CD4-positive, alpha-beta T cell (primary cell): ENCODE measurements at regions of chr5 and their contacts with region 1.

Region 1: DNA sequence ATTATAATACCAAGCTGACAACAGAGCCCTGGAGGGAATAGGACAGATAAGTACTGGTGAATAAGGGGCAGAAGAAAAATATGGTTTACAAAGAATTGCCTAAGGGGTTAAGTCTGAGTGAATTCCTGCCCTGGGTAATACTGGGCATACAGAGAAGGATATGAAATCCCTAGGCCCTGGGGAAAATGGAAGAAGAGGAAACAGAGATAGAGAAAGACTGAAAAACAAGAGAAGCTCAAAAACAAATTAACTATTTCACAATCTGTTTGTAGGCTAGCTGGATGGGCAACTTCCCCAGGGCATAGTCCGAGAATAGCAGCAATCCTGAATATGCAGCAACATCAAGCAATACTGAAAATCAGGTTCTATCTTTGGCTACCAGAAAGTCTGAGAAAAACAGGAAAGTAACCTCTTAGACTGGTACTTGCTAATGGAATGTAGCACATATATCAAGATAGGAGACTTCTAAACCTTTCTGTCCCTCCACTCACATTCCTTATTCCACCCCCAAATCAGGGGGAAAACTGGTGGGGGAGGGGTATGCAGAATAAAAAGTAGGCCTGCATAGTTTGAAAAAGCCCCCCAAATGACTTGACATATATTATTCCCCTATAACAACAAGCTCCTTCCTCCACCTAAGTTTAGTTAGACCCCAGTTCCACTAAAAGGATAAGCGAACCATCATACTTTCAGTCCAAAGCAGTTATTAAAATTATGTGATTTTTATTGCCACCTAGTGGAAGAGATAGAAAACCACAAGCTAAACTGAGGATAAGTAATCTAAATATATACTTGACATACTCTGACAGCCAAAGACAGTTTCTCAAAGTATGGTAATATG is 20.6 kb downstream of the SLC38A9 start:
- DNase-seq: peak in 3 of 14 experiments; percentile 47
- ATAC-seq: peak; percentile 59
- H3K4me3 ChIP-seq: no peak overlapping the region
- H3K4me3 Mint-ChIP-seq: no peak overlapping the region
- H3K27ac ChIP-seq: no peak overlapping the region
- H3K27ac Mint-ChIP-seq: no peak overlapping the region
- H3K4me1 ChIP-seq: no peaks in the 10 kb centered on the region
- H3K4me1 Mint-ChIP-seq: peaks cover 5% of the 10 kb centered on the region
- H3K27me3 ChIP-seq: no peaks in the 10 kb centered on the region
- H3K27me3 Mint-ChIP-seq: no peaks in the 10 kb centered on the region
- CTCF ChIP-seq: peak; percentile 82

Region 2: GRCh38 chr5:54889826-54890225 is 801.7 kb before region 1 on chr5:
- CTCF ChIA-PET with region 1: no interaction called
- POLR2A ChIA-PET with region 1: no interaction called
- intact Hi-C with region 1: loop called in 1 of 2 experiments (anchors 5 kb)
- DNase-seq: no peak
- ATAC-seq: no peak
- H3K4me3 ChIP-seq: no peak overlapping the region
- H3K4me3 Mint-ChIP-seq: no peak overlapping the region
- H3K27ac ChIP-seq: no peak overlapping the region
- H3K27ac Mint-ChIP-seq: no peak overlapping the region
- H3K4me1 ChIP-seq: no peaks in the 10 kb centered on the region
- H3K4me1 Mint-ChIP-seq: no peaks in the 10 kb centered on the region
- H3K27me3 ChIP-seq: peaks cover 15 to 39% of the 10 kb centered on the region in 2 experiments
- H3K27me3 Mint-ChIP-seq: peaks cover 77% of the 10 kb centered on the region
- CTCF ChIP-seq: no peak

Region 3: GRCh38 chr5:55172051-55172899 is 519.2 kb before region 1 on chr5:
- CTCF ChIA-PET with region 1: no interaction called
- POLR2A ChIA-PET with region 1: no interaction called
- intact Hi-C with region 1: loop called (anchors 5 kb)
- DNase-seq: peak; percentile 18 to 90 (median 47)
- ATAC-seq: peak; percentile 82
- H3K4me3 ChIP-seq: peak overlapping the region; percentile 63
- H3K4me3 Mint-ChIP-seq: peak overlapping the region; percentile 79
- H3K27ac ChIP-seq: no peak overlapping the region
- H3K27ac Mint-ChIP-seq: no peak overlapping the region
- H3K4me1 ChIP-seq: peaks cover 28% of the 10 kb centered on the region
- H3K4me1 Mint-ChIP-seq: peaks cover 43% of the 10 kb centered on the region
- H3K27me3 ChIP-seq: peaks cover 49 to 83% of the 10 kb centered on the region in 2 experiments
- H3K27me3 Mint-ChIP-seq: peaks cover 86% of the 10 kb centered on the region
- CTCF ChIP-seq: peak; percentile 90

Region 4: GRCh38 chr5:55324815-55325418 is 366.6 kb before region 1 on chr5:
- CTCF ChIA-PET with region 1: no interaction called
- POLR2A ChIA-PET with region 1: no interaction called
- intact Hi-C with region 1: loop called (anchors 5 kb)
- DNase-seq: peak in 3 of 14 experiments; percentile 58 to 60 (median 59)
- ATAC-seq: peak; percentile 82
- H3K4me3 ChIP-seq: no peak overlapping the region
- H3K4me3 Mint-ChIP-seq: no peak overlapping the region
- H3K27ac ChIP-seq: no peak overlapping the region
- H3K27ac Mint-ChIP-seq: no peak overlapping the region
- H3K4me1 ChIP-seq: peaks cover under 1% of the 10 kb centered on the region
- H3K4me1 Mint-ChIP-seq: peaks cover 48% of the 10 kb centered on the region
- H3K27me3 ChIP-seq: no peaks in the 10 kb centered on the region
- H3K27me3 Mint-ChIP-seq: no peaks in the 10 kb centered on the region
- CTCF ChIP-seq: peak; percentile 61

Region 5: DNA sequence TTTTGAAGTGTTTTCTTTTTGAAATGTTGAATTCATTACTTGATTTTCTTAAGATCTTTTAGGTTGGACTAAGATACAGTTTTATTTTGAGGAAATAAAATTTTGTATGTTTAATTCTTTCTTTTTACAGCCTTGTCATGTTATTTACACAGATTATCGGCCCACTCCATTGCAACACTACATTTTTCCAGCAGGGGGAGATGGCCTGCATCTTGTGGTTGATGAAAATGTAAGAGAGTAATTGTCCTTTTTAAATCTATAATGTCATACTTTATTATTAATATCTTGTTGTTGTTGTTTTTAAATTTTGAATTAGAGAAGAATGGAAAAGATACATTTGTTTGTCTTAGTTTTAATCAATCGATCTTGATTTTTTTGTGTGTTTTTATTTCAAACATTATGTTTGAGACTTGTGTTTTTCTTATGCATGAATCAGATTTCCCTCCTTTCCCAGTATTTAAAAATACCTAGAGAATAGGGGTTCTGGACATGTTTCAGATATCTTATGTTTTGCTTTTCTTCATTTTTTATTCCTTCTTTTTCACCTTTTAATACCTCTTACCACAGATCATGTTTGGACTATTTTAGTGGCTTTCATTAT is 347.0 kb before region 1 on chr5:
- CTCF ChIA-PET with region 1: no interaction called
- POLR2A ChIA-PET with region 1: no interaction called
- intact Hi-C with region 1: loop called (anchors 1 to 2 kb)
- DNase-seq: peak; percentile 30 to 78 (median 52)
- ATAC-seq: peak; percentile 73
- H3K4me3 ChIP-seq: no peak overlapping the region
- H3K4me3 Mint-ChIP-seq: no peak overlapping the region
- H3K27ac ChIP-seq: no peak overlapping the region
- H3K27ac Mint-ChIP-seq: no peak overlapping the region
- H3K4me1 ChIP-seq: no peaks in the 10 kb centered on the region
- H3K4me1 Mint-ChIP-seq: peaks cover 12% of the 10 kb centered on the region
- H3K27me3 ChIP-seq: no peaks in the 10 kb centered on the region
- H3K27me3 Mint-ChIP-seq: no peaks in the 10 kb centered on the region
- CTCF ChIP-seq: peak; percentile 94

Region 6: DNA sequence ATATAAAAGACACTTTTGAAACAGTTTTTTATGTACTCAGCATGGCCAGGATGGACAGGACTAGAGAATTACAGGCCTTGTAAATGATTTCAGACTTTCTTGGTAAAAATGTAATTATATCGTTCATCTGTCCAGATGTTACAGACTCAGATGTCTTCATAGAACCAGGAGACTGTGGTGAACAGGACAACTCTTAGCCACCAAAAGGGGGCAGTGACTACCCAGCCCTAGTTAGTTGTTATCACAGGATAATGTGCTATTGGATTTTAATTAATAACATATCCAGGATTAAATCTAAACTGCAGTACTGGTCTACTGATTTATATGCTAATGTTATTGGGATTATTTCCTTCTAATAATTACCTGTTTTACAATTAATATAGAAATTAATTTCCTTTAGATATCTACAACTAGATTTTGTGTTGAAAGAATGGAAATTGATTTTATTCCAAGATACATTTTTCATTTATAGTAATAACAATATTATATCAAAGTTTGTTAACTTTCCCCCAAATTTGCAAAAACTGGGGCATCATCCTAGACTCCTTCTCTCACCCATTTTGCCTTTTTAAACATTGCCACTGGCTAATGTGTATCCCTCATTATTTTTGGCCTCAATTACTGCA is 284.3 kb before region 1 on chr5:
- CTCF ChIA-PET with region 1: interaction called, 3 read pairs
- POLR2A ChIA-PET with region 1: no interaction called
- intact Hi-C with region 1: loop called (anchors 1 to 2 kb)
- DNase-seq: peak in 4 of 14 experiments; percentile 20 to 55 (median 41)
- ATAC-seq: peak; percentile 54
- H3K4me3 ChIP-seq: no peak overlapping the region
- H3K4me3 Mint-ChIP-seq: no peak overlapping the region
- H3K27ac ChIP-seq: no peak overlapping the region
- H3K27ac Mint-ChIP-seq: no peak overlapping the region
- H3K4me1 ChIP-seq: no peaks in the 10 kb centered on the region
- H3K4me1 Mint-ChIP-seq: peaks cover 6% of the 10 kb centered on the region
- H3K27me3 ChIP-seq: no peaks in the 10 kb centered on the region
- H3K27me3 Mint-ChIP-seq: no peaks in the 10 kb centered on the region
- CTCF ChIP-seq: peak; percentile 41

Region 7: DNA sequence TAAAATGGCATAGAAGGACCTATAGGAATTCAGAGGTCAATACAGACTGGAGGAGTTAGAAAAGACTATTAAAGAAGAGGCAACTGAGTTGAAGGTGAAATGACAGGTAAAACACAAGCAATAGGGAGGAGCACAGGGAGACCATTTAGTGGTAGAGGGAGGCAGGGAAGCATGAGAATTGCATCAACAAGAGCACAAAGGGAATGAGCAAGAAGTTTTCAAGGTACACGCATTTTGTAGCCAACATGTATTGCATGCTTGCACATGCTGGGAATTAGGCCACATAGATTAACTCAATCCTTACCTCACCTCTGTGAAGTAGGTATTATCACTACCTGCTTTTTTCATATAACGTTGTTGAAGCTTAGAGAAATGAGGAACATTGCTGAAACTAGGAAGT is 199.0 kb before region 1 on chr5:
- CTCF ChIA-PET with region 1: no interaction called
- POLR2A ChIA-PET with region 1: no interaction called
- intact Hi-C with region 1: loop called in 1 of 2 experiments (anchors 5 kb)
- DNase-seq: no peak
- ATAC-seq: no peak
- H3K4me3 ChIP-seq: no peak overlapping the region
- H3K4me3 Mint-ChIP-seq: no peak overlapping the region
- H3K27ac ChIP-seq: no peak overlapping the region
- H3K27ac Mint-ChIP-seq: no peak overlapping the region
- H3K4me1 ChIP-seq: no peaks in the 10 kb centered on the region
- H3K4me1 Mint-ChIP-seq: no peaks in the 10 kb centered on the region
- H3K27me3 ChIP-seq: no peaks in the 10 kb centered on the region
- H3K27me3 Mint-ChIP-seq: no peaks in the 10 kb centered on the region
- CTCF ChIP-seq: no peak

Region 8: GRCh38 chr5:55582256-55582655 is 109.2 kb before region 1 on chr5:
- CTCF ChIA-PET with region 1: no interaction called
- POLR2A ChIA-PET with region 1: no interaction called
- intact Hi-C with region 1: no loop called
- DNase-seq: peak in 3 of 14 experiments; percentile 17 to 37 (median 25)
- ATAC-seq: peak; percentile 62
- H3K4me3 ChIP-seq: no peak overlapping the region
- H3K4me3 Mint-ChIP-seq: no peak overlapping the region
- H3K27ac ChIP-seq: no peak overlapping the region
- H3K27ac Mint-ChIP-seq: peak overlapping the region; percentile 28
- H3K4me1 ChIP-seq: no peaks in the 10 kb centered on the region
- H3K4me1 Mint-ChIP-seq: peaks cover 12% of the 10 kb centered on the region
- H3K27me3 ChIP-seq: no peaks in the 10 kb centered on the region
- H3K27me3 Mint-ChIP-seq: no peaks in the 10 kb centered on the region
- CTCF ChIP-seq: no peak

Region 9: GRCh38 chr5:56012281-56012963 is 320.9 kb after region 1 on chr5:
- CTCF ChIA-PET with region 1: no interaction called
- POLR2A ChIA-PET with region 1: no interaction called
- intact Hi-C with region 1: no loop called
- DNase-seq: peak in 8 of 14 experiments; percentile 13 to 82 (median 49)
- ATAC-seq: peak; percentile 94
- H3K4me3 ChIP-seq: no peak overlapping the region
- H3K4me3 Mint-ChIP-seq: peak overlapping the region; percentile 16
- H3K27ac ChIP-seq: peak overlapping the region; percentile 29 to 53
- H3K27ac Mint-ChIP-seq: peak overlapping the region; percentile 75
- H3K4me1 ChIP-seq: peaks cover 33% of the 10 kb centered on the region
- H3K4me1 Mint-ChIP-seq: peaks cover 43% of the 10 kb centered on the region
- H3K27me3 ChIP-seq: no peaks in the 10 kb centered on the region
- H3K27me3 Mint-ChIP-seq: no peaks in the 10 kb centered on the region
- CTCF ChIP-seq: no peak